Activated CD4-positive, alpha-beta T cell treated with anti-CD3 and anti-CD28 coated beads for 36 hours (primary cell): ENCODE measurements at regions of chr10 and their contacts with region 1.

Region 1: GRCh38 chr10:62732841-62733653 is 71.5 kb upstream of the ADO start:
- DNase-seq: peak; percentile 79
- ATAC-seq: peak; percentile 87
- H3K4me3 Mint-ChIP-seq: peak overlapping the region; percentile 3
- H3K27ac Mint-ChIP-seq: no peak overlapping the region
- H3K4me1 Mint-ChIP-seq: peaks cover 25% of the 10 kb centered on the region
- H3K27me3 Mint-ChIP-seq: peaks cover 5% of the 10 kb centered on the region

Region 2: GRCh38 chr10:62637249-62638061 is 95.6 kb before region 1 on chr10:
- CTCF ChIA-PET with region 1: interaction called, 7 read pairs
- POLR2A ChIA-PET with region 1: interaction called, 8 read pairs
- intact Hi-C with region 1: loop called (anchors 1 kb)
- DNase-seq: peak; percentile 82
- ATAC-seq: peak; percentile 95
- H3K4me3 Mint-ChIP-seq: no peak overlapping the region
- H3K27ac Mint-ChIP-seq: no peak overlapping the region
- H3K4me1 Mint-ChIP-seq: peaks cover 21% of the 10 kb centered on the region
- H3K27me3 Mint-ChIP-seq: no peaks in the 10 kb centered on the region

Region 3: DNA sequence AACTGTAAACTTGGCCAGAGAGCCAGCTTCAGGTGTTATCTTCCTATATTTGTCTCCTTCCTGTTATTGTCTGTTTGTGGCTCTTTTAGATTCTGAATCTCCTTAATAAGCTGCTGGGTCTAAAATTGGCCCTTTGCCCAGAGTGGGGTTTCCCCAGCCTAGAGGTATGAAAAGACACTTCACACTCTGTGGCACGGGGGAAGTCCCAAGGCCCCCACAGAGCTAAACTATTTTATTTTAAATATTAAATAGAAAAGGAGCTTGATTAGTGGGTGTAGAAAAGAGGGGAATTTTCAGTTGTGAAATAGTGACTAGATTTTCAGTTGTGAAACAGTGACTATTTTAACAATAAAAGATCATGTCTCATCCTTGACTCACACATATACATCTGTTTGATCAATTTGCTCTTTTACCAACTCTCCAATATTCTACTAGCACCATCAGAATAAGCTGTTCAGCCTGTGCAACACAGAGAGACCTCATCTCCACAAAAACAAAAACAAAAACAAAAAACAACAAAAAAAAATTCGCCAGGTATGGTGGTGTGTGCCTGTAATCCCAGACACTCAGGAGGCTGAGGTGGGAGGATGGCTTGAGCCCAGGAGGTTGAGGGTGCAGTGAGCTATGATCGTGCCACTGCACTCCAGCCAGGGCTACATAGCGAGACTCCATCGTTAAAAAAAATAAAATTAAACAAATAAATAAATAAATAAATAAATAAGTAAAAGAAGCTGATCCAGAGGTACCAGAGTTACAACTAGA is 46.6 kb after region 1 on chr10:
- CTCF ChIA-PET with region 1: interaction called, 16 read pairs
- POLR2A ChIA-PET with region 1: interaction called, 12 read pairs
- intact Hi-C with region 1: loop called (anchors 1 kb)
- DNase-seq: peak; percentile 92
- ATAC-seq: peak; percentile 91
- H3K4me3 Mint-ChIP-seq: no peak overlapping the region
- H3K27ac Mint-ChIP-seq: peak overlapping the region; percentile 80
- H3K4me1 Mint-ChIP-seq: peaks cover 34% of the 10 kb centered on the region
- H3K27me3 Mint-ChIP-seq: peaks cover 4% of the 10 kb centered on the region

Region 4: DNA sequence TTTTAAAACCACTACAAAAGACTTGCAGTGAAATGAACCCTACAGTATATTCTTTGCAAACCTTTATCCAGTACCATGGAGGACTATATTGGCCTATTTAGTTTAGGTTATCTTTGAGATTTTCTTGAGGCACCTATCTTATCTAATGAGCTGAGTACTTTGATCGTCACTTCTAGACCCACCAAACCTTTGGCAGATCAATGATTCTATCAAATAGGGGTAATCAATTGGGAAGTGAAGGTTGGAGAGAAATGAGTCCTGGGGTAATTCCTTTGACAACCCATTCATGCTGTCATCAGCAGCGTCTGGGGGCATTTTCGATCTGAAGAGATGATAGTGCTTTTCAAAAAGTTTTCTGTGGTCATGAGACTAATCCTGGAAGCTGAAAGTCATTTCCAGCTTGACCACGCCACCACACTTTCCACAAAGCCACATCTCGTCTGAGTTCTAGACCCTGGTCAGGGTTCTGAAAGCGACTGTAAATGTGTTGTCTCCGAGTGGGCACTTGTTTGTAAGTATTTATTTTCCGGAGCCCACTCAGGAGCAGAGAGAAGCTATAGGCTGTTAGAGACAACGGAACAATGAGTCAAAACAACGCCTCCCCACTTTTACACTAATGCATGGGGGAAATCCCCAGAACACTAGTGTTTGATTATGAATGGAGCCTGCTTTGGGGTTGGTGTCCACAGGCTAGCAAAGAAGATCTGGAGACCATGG is 78.3 kb after region 1 on chr10:
- CTCF ChIA-PET with region 1: interaction called, 7 read pairs
- POLR2A ChIA-PET with region 1: interaction called, 17 read pairs
- intact Hi-C with region 1: loop called (anchors 1 kb)
- DNase-seq: peak; percentile 93
- ATAC-seq: peak; percentile 48
- H3K4me3 Mint-ChIP-seq: peak overlapping the region; percentile 99
- H3K27ac Mint-ChIP-seq: peak overlapping the region; percentile 87
- H3K4me1 Mint-ChIP-seq: peaks cover 75% of the 10 kb centered on the region
- H3K27me3 Mint-ChIP-seq: no peaks in the 10 kb centered on the region

Region 5: GRCh38 chr10:63707254-63707910 is 974.3 kb after region 1 on chr10:
- CTCF ChIA-PET with region 1: no interaction called
- POLR2A ChIA-PET with region 1: interaction called, 4 read pairs
- intact Hi-C with region 1: loop called in 1 of 2 experiments (anchors 5 kb)
- DNase-seq: peak; percentile 39
- ATAC-seq: peak; percentile 94
- H3K4me3 Mint-ChIP-seq: no peak overlapping the region
- H3K27ac Mint-ChIP-seq: no peak overlapping the region
- H3K4me1 Mint-ChIP-seq: peaks cover 19% of the 10 kb centered on the region
- H3K27me3 Mint-ChIP-seq: no peaks in the 10 kb centered on the region